Panc1 (cell line): ENCODE measurements at regions of chr1 and their contacts with region 1.

Region 1: DNA sequence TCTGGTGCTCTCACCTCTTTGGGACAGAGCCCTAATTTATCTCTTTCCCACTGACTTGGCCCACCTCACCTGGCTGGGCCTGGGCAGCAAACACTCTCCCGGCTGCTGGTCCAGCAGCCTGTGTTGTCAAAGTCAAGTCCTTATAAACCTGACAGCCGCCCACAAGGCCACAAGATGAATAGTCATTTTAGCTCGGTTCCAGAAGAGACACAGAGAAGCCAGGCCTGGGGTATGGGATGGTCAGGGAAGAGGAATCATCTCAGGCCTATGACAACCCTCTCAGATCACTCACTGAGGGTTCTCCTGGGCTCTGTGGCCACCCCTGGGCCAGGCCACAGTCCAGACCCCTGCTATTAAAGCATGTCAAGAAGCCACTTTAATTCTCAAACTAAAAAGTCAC is 158.5 kb downstream of the FOXD2 start:
- DNase-seq: no peak
- ATAC-seq: no peak
- H3K4me3 ChIP-seq: no peak overlapping the region
- H3K27ac ChIP-seq: no peak overlapping the region
- H3K4me1 ChIP-seq: no peaks in the 10 kb centered on the region
- H3K27me3 ChIP-seq: no peaks in the 10 kb centered on the region; the same call in 1 of the 2 replicates
- CTCF ChIP-seq: no peak

Region 2: GRCh38 chr1:47558601-47559593 is 37.4 kb before region 1 on chr1:
- CTCF ChIA-PET with region 1: no interaction called
- POLR2A ChIA-PET with region 1: no interaction called
- in situ Hi-C with region 1: no loop called
- intact Hi-C with region 1: no loop called
- DNase-seq: no peak
- ATAC-seq: no peak; the same call in 1 of the 2 replicates
- H3K4me3 ChIP-seq: no peak overlapping the region
- H3K27ac ChIP-seq: no peak overlapping the region
- H3K4me1 ChIP-seq: no peaks in the 10 kb centered on the region
- H3K27me3 ChIP-seq: peaks cover 2% of the 10 kb centered on the region
- CTCF ChIP-seq: no peak

Region 3: DNA sequence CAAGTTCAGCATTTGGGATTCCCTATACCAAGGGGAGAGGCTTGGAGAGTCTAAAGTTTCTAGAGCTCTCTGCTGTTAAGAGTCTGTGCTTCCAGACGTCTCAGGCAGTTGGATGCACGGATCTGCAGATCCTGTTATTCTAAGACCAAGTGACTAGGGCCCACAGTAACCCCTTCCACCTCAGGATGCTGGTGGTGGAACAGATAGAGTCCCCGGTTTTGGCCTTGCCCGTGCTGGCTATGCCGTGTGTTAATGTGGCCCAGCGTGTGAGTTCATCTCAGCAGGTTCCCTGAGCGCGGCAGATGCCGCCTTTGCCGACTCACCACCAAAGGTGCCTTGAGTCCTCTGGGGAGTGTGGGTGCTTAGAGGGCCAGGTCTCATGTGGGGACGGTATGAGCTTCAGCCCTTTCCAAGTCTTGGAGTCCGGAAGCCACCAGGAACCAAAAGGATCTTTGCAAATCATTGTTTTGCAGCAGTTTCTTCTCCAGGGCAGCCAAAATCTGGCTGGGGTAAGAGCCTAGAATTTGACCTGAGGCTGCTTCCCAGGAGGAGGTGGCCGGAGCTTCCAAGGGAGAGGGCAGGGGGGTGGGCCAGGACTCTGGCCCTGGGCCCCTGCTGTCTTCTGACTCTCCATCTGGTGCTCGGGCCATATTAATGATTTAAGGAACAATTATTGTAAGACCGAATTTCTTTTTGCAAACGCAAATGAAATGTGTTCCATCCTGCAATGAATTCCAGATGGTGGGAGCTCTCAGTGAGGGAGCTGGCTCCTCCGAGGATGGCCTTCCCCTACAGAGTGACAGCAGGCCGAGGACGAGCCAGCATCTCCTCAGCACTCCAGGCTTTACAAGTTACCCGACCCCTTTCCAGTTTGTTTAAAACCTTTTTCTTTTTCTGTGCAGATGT is 47.2 kb after region 1 on chr1:
- CTCF ChIA-PET with region 1: interaction called, 10 read pairs
- POLR2A ChIA-PET with region 1: no interaction called
- in situ Hi-C with region 1: no loop called
- intact Hi-C with region 1: no loop called
- DNase-seq: no peak
- ATAC-seq: no peak
- H3K4me3 ChIP-seq: no peak overlapping the region
- H3K27ac ChIP-seq: no peak overlapping the region
- H3K4me1 ChIP-seq: no peaks in the 10 kb centered on the region
- H3K27me3 ChIP-seq: no peaks in the 10 kb centered on the region
- CTCF ChIP-seq: no peak